AG04449 (cell line): ENCODE measurements at regions of chr11 and their contacts with region 1.

Region 1: DNA sequence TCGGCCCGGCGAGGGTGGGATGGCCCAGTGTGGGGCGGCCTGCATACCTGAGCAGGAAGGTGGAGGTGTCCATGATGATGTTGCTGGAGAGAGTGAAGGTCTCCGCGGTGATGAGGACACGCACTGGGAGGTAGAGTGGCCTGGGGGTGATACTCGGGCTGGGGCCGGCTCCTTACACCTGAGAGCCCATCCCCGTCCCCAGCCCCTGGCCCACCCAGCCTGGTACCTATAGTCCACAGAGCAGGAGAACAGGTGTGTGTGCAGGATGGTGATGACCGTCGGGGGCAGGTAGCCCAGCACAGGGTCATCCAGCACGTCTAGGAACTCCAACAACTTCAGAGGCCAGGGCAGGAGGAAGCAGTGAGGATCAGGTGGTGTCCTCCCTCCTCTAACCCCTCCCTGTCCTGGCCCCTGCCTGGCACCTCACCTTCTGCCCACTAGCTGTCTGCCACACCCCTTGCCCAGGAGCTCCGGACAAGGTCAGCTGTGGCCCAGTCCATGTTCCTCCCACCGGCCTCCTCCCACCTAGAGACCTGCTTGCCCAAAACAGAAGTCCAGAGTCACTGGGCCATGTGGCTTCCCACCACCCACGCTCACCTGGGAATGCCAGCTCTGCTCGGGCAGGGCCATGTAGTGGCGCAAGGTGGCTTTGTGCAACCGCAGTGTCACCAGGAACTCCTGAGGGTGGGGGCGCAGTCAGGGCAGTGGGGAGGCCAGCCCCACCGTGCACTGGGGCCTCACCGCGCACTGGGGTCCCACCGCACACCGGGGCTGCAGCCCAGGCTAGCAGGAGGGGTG is 11.3 kb downstream of the ATG2A start:
- DNase-seq: no peak
- H3K4me3 ChIP-seq: no peak overlapping the region
- CTCF ChIP-seq: no peak

Region 2: GRCh38 chr11:64894070-64894796 is 11.5 kb before region 1 on chr11:
- CTCF ChIA-PET with region 1: interaction called, 35 read pairs
- POLR2A ChIA-PET with region 1: no interaction called
- DNase-seq: no peak
- H3K4me3 ChIP-seq: no peak overlapping the region
- CTCF ChIP-seq: peak; percentile 96